ENCODE measurements at regions of chr1 and their contacts with region 1.

Region 1: DNA sequence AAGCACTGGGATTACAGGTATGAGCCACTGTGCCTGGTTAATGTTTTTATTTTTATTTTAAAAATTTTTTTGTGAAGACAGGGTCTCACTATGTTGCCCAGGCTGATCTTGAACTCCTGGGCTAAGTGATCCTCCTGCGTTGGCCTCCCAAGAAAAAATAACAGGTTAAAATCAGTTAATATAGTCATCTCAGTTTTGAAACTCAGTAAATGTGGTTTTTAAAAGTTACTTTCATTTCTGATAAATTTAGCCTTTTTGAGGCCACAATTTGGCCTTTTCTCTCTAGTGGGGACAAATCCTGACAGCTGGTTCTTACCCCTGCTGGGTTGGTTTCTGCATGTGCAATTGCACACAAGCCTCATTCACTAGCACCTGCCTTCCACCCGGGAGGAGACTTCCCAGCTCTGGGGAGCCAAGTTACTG is 13.3 kb downstream of the PMF1 start:
- DNase-seq: no peak
- ATAC-seq: no peak
- H3K4me3 Mint-ChIP-seq: no peak overlapping the region
- H3K27ac Mint-ChIP-seq: no peak overlapping the region
- H3K4me1 Mint-ChIP-seq: peaks cover 4% of the 10 kb centered on the region
- H3K27me3 Mint-ChIP-seq: no peaks in the 10 kb centered on the region
- CTCF ChIP-seq: no peak

Region 2: DNA sequence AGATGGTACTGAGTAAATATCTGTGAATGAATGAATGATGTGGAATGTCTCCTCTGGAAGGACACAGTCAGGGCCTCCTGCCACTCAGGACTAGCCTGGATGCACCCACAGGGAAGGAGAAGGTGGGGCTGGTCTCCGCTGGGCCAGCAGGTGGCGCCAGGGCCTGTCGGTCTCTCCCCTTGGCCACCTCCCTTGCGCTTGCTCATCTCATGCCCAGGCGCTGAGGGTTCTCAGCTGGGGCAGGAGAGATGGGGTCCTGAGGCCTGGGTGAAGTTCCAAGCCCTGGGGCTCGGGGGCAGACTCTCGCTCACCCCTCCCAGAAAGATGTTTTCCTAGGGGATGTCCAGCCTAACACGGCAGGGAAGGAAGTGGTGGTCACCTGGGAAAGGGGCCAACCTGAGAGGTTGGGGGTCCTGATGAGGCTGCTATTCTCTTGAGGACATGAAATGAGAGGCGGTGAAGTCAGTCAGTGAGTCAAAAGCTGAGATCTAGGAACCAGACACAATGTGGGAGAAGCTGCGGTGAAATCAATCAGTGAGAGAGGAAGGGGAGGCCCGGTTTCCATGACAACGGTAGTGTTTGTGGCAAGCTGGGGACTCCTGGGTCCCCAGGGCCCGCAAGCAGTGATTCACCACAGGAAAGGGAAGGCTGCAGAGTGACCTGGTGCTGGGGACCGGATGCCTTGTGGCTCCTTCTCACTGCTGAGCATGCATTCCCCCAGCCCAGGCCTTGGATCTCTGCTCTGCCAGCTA is 129.3 kb before region 1 on chr1:
- CTCF ChIA-PET with region 1: interaction called, 14 read pairs
- POLR2A ChIA-PET with region 1: interaction called, 5 read pairs
- intact Hi-C with region 1: no loop called
- DNase-seq: peak; percentile 85
- ATAC-seq: peak; percentile 86
- H3K4me3 Mint-ChIP-seq: peak overlapping the region; percentile 75
- H3K27ac Mint-ChIP-seq: peak overlapping the region; percentile 99
- H3K4me1 Mint-ChIP-seq: peaks cover 36% of the 10 kb centered on the region
- H3K27me3 Mint-ChIP-seq: no peaks in the 10 kb centered on the region
- CTCF ChIP-seq: no peak

Region 3: DNA sequence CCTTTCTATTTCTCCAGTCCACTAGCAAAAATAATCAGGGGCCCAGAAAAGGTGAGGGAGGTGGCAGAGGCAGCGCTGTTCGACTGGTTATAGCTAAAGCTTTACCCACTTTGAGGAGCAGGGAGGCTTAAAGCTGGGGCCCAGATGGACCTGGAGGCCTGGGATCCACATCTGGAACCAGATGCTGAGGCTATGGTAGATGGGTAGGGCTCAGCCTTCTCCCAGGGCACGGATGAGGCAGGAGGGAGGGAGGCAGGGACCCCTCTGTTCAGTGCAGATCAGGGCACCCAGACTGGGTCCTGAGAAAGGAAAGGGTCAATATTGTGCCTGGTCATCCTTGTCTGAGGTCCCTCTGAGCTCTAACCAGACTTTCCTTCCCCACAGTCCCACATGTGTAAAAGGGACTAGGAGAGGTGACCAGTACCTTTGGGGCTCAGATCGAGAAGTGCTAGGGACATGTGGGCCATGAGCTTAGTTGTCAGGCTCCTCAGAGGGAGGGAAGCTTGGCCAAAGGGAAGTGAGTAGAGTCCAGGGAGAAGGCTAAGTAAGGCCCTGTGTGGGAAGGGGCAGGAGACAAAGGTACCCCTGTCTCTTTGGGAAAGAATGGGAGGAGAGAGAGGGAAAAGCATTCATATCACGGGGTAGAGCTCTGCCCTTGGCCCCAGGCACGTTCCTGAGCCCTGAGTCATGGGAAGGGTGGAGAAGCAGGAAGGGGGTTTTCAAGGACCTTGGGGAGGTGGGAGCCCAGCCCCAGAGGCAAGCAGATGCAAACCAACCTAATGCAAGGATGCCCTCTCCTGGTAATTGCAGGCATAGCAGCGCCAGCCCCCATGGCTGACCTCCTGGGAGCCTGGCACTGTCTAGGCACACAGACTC is 96.2 kb before region 1 on chr1:
- CTCF ChIA-PET with region 1: interaction called, 18 read pairs
- POLR2A ChIA-PET with region 1: interaction called, 4 read pairs
- intact Hi-C with region 1: no loop called
- DNase-seq: peak; percentile 77
- ATAC-seq: peak; percentile 53
- H3K4me3 Mint-ChIP-seq: no peak overlapping the region
- H3K27ac Mint-ChIP-seq: no peak overlapping the region
- H3K4me1 Mint-ChIP-seq: peaks cover 28% of the 10 kb centered on the region
- H3K27me3 Mint-ChIP-seq: peaks cover 2% of the 10 kb centered on the region
- CTCF ChIP-seq: peak; percentile 71

Region 4: DNA sequence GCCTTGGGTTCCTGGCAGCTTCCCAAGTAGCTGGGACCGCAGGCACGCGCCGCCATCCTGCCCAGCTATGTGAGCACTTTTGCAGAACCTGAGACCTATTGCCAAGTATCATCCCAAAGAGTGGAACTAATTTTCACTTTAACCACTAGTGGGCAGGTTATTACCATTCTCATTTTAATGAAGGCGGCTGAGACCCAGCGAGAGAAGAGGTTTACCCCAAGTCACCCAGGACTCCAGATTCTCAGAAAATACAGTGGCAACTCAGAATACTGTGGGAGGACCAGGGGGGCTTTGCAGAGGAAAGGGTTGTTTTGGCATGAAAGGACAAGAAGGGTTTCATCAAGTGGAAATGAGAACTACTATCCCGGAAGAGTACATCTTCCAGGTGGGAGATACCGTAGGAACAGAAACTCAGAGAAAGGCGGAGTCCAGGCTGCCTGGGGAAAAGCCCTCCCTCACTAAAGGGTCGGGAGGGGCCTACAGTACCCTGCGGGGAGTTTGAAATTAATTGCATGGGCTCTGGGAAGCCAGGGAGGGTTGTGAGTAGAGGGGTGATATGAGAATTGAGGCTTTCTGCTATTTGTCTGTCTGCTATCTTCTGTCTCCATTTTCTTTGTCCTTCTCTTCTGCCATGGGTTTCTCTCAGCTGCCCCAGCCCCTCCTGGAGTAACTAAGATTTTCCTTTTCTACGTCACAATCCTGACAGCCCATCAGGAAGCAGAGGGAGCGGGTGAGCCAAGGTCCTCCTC is 79.9 kb before region 1 on chr1:
- CTCF ChIA-PET with region 1: interaction called, 215 read pairs
- POLR2A ChIA-PET with region 1: interaction called, 53 read pairs
- intact Hi-C with region 1: loop called (anchors 1 kb)
- DNase-seq: no peak
- ATAC-seq: peak; percentile 59
- H3K4me3 Mint-ChIP-seq: peak overlapping the region; percentile 66
- H3K27ac Mint-ChIP-seq: peak overlapping the region; percentile 71
- H3K4me1 Mint-ChIP-seq: peaks cover 48% of the 10 kb centered on the region
- H3K27me3 Mint-ChIP-seq: peaks cover 6% of the 10 kb centered on the region
- CTCF ChIP-seq: no peak

Region 5: DNA sequence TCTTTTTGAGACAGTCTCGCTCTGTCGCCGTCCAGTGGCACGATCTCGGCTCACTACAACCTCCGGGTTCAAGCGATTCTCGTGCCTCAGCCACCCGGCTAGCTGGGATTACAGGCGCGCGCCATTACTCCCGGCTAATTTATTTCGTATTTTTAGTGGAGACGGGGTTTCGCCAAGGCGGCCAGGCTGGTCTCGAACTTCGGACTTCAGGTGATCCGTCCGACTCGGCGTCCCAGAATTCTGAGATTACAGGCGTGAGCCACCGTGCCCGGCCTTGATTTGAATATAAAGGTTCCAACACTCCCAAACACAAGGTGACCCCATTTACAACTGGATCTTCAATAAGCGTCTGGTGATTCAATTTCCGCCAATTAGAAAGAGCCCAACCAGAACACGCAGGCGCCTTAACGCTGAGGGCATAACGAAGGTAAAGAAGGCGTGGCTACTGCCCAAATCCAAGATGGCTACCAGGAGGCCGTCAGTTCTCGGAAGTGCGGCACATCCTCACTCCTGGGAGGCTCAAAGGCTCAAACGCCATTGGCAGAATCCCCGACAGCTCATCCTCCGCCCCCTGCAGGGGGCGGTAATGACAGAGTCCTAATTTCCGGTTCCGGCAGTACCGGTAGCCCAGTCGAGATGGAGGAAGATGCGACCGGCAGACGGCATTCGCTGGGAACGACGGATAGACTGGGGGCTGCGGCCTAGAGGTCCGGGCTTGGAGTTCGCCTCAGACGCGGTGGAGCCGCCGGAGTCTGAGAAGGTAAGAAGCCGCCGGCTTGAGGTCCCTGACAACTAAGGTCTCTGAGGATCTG is 32.4 kb before region 1 on chr1 and contains the start of gene SLC25A44:
- CTCF ChIA-PET with region 1: interaction called, 7 read pairs
- POLR2A ChIA-PET with region 1: interaction called, 5 read pairs
- intact Hi-C with region 1: loop called (anchors 5 kb)
- DNase-seq: peak; percentile 93
- ATAC-seq: peak; percentile 98
- H3K4me3 Mint-ChIP-seq: peak within 1 kb of the TSS; percentile 96
- H3K27ac Mint-ChIP-seq: peak within 1 kb of the TSS; percentile 91
- H3K4me1 Mint-ChIP-seq: peaks cover 38% of the 10 kb centered on the region
- H3K27me3 Mint-ChIP-seq: no peaks in the 10 kb centered on the region
- CTCF ChIP-seq: no peak
- total RNA-seq, gene SLC25A44: 17.9 and 26.4 TPM in 2 replicates

Region 6: GRCh38 chr1:156319664-156320063 is 93.5 kb after region 1 on chr1:
- CTCF ChIA-PET with region 1: interaction called, 3 read pairs
- POLR2A ChIA-PET with region 1: no interaction called
- intact Hi-C with region 1: loop called (anchors 5 kb)
- DNase-seq: no peak
- ATAC-seq: no peak
- H3K4me3 Mint-ChIP-seq: no peak overlapping the region
- H3K27ac Mint-ChIP-seq: no peak overlapping the region
- H3K4me1 Mint-ChIP-seq: no peaks in the 10 kb centered on the region
- H3K27me3 Mint-ChIP-seq: no peaks in the 10 kb centered on the region
- CTCF ChIP-seq: no peak

Measured in activated B cell treated with CpG ODN at 0.5 μM for 24 hours (primary cell).